MCF 10A (cell line): ENCODE measurements at regions of chr7 and their contacts with region 1.

Region 1: GRCh38 chr7:113015032-113015645 is 71.5 kb downstream of the GPR85 start:
- DNase-seq: peak; percentile 53
- H3K4me3 Mint-ChIP-seq: no peak overlapping the region
- H3K27ac Mint-ChIP-seq: peak overlapping the region; percentile 70
- H3K4me1 Mint-ChIP-seq: peaks cover 15% of the 10 kb centered on the region
- H3K27me3 Mint-ChIP-seq: no peaks in the 10 kb centered on the region
- CTCF ChIP-seq: no peak

Region 2: GRCh38 chr7:113289140-113289740 is 274.1 kb after region 1 on chr7:
- CTCF ChIA-PET with region 1: interaction called, 22 read pairs
- POLR2A ChIA-PET with region 1: no interaction called
- intact Hi-C with region 1: loop called (anchors 1 kb)
- DNase-seq: peak; percentile 64
- H3K4me3 Mint-ChIP-seq: no peak overlapping the region
- H3K27ac Mint-ChIP-seq: no peak overlapping the region
- H3K4me1 Mint-ChIP-seq: peaks cover 5% of the 10 kb centered on the region
- H3K27me3 Mint-ChIP-seq: no peaks in the 10 kb centered on the region
- CTCF ChIP-seq: peak; percentile 68

Region 3: DNA sequence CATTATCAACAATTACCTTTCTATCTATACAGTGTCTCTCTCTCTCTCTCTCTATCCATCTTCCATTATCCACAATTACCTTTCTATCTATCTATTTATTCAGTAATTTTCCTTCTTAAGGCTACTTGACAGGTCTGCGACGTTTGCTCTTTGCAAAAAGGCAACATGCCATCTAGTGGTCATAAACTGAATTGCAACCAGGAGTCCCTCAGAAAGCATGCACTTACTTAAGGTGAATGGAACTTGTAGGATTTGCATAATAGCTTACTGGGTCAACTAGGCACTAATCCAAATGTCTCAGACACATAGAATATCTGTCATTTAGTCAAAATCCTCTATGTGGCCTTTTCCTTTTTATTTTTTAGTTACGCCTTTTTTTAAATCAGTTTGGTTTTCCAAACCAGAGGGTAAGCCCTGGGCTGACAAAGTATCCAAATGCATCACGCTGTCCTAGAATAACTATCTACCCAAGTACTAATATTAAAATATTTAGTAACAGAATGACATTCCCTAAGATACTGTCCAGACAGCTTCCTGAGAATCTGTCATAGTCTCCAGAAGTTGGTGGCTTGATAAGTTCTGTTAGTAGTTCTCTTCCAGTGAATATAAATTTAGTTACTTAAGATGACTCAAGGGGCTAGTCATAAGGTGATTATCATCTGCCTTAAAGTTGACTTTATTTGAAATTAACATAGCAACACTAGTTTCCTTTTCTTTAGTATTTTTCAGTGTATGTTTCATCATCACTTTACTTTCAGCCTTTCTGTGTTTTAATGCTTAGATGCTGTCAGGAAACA is 695.4 kb after region 1 on chr7:
- CTCF ChIA-PET with region 1: interaction called, 8 read pairs
- POLR2A ChIA-PET with region 1: no interaction called
- intact Hi-C with region 1: loop called (anchors 1 kb)
- DNase-seq: peak; percentile 84
- H3K4me3 Mint-ChIP-seq: no peak overlapping the region
- H3K27ac Mint-ChIP-seq: no peak overlapping the region
- H3K4me1 Mint-ChIP-seq: peaks cover under 1% of the 10 kb centered on the region
- H3K27me3 Mint-ChIP-seq: no peaks in the 10 kb centered on the region
- CTCF ChIP-seq: peak; percentile 90